Activated T-helper 2 cell treated with anti-CD3 and anti-CD28 coated beads, Interferon-gamma antibody, Interleukin-2, Interleukin-4, amounts not matched to agents 10 μg/mL and 5 μg/mL and 100 μg/mL, durations not matched to agents 14 hours and 24 hours and 36 hours (primary cell): ENCODE measurements at regions of chr2 and their contacts with region 1.

Region 1: GRCh38 chr2:96856776-96857673 is 791 bp downstream of the ANKRD39 start:
- DNase-seq: no peak
- H3K4me3 Mint-ChIP-seq: peak overlapping the region; percentile 90
- H3K27ac Mint-ChIP-seq: peak overlapping the region; percentile 82
- H3K4me1 Mint-ChIP-seq: peaks cover 24% of the 10 kb centered on the region
- H3K27me3 Mint-ChIP-seq: no peaks in the 10 kb centered on the region

Region 2: DNA sequence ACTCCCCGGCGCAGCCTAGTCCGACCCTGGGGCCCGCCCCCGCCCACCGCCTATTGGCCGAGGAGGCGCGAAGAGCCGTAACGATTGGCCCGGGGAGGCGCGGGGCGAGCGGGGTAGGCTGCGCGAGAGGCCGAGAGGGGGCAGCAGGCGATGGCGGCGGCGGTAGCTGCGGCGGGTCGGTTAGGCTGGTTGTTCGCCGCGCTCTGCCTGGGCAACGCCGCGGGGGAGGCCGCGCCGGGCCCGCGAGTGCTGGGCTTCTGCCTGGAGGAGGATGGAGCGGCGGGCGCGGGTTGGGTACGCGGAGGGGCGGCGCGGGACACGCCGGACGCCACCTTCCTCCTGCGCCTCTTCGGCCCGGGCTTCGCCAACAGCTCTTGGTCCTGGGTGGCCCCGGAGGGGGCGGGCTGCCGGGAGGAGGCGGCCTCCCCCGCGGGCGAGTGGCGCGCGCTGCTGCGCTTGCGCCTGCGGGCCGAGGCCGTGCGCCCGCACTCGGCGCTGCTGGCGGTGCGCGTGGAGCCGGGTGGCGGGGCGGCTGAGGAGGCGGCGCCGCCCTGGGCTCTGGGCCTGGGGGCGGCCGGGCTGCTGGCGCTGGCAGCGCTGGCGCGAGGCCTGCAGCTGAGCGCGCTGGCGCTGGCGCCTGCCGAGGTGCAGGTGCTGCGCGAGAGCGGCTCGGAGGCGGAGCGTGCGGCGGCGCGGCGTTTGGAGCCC is 40.7 kb before region 1 on chr2 and contains the start of gene CNNM3:
- intact Hi-C with region 1: loop called (anchors 5 kb)
- DNase-seq: peak; percentile 95
- H3K4me3 Mint-ChIP-seq: peak within 1 kb of the TSS; percentile 84
- H3K27ac Mint-ChIP-seq: peak within 1 kb of the TSS; percentile 70
- H3K4me1 Mint-ChIP-seq: peaks cover 41% of the 10 kb centered on the region
- H3K27me3 Mint-ChIP-seq: no peaks in the 10 kb centered on the region
- total RNA-seq, gene CNNM3: 28.7 and 30.4 TPM in 2 replicates

Region 3: DNA sequence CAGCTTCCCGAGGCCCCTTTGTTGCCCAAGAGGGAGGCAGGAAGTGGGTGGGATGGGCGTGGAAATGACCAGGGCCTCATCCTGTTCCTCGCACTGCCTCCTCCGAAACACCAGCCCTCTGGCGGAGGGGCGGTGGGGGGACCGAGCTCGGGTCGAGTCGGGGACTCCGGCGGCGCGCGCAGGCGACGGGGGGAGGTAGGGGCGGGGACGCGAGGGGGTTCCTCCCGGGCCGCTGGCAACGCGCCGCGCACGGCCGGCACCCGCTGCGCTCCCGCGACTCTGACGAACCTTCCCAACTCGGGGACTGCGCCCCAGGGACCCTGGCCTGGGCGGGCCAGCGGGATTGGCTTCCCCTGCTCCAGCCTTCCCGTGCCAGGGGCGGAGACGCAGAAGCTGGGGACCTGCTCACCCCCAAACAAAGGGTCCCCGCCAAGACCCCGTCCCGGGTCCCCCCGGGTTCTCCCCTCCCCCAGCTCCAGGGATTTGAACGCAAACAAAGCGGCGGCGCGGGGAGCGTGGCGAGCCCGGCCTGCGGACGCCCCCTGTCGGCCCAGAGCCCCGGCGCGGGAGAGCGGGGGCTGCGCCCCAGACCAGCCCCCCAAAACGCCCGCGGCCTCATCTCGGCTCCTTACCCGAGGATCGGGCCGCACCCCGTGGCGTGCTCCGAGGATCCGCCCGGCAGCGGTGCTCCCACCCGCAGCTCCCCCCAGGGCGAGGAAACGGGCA is 11.7 kb after region 1 on chr2:
- intact Hi-C with region 1: loop called (anchors 1 kb)
- DNase-seq: peak; percentile 62
- H3K4me3 Mint-ChIP-seq: peak overlapping the region; percentile 84
- H3K27ac Mint-ChIP-seq: peak overlapping the region; percentile 77
- H3K4me1 Mint-ChIP-seq: peaks cover 19% of the 10 kb centered on the region
- H3K27me3 Mint-ChIP-seq: peaks cover 6% of the 10 kb centered on the region